SK-N-SH (cell line): ENCODE measurements at regions of chr5 and their contacts with region 1.

Region 1: GRCh38 chr5:138077065-138077696 is 6.7 kb upstream of the WNT8A start:
- DNase-seq: peak; percentile 76
- H3K4me3 ChIP-seq: no peak overlapping the region; a peak in 1 of 4 replicates
- H3K27ac ChIP-seq: no peak overlapping the region
- H3K4me1 ChIP-seq: no peaks in the 10 kb centered on the region
- H3K27me3 ChIP-seq: no peaks in the 10 kb centered on the region; the same call in 1 of the 2 replicates
- CTCF ChIP-seq: peak; percentile 90
- EP300 ChIP-seq: no peak
- RAD21 ChIP-seq: peak; percentile 90

Region 2: DNA sequence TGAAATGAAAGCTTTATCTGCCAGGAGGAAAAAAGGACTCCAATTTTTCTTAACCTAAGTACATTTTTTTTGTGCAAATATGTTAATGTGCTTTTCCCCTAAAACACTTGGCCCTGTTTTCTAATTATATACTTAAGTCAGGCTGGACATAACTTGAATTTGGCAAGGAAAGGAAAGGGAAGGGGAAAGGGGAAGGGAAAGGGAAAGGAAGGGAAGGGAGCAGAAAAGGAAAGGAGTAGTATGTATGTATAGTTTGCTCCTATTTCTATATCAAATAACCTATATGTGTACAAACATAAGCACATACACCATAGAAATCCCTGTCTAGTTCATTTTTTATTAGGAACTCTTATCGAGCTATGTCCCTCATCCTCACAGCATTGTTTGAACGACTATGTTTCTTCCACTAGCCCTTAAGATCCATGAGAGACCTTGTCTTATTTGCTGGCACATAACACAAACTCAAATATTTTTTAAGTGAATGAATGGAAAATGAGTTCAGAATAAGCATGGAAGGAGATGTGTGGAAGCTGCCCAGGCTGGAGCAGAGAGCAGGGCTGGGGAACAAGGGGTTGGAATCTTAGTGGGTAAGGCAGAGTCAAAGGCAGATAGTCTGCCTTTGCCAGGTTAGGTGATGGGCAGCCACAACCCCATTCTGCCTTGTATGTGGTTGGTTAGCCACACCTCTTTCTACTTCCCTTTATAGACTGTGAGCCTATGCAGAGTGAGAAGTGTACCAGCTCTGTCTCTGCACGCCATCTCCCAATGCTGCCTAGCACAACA is 411.3 kb before region 1 on chr5:
- CTCF ChIA-PET with region 1: no interaction called
- POLR2A ChIA-PET with region 1: no interaction called
- DNase-seq: no peak
- H3K4me3 ChIP-seq: no peak overlapping the region
- H3K27ac ChIP-seq: no peak overlapping the region
- H3K4me1 ChIP-seq: no peaks in the 10 kb centered on the region; a peak in 1 of 4 replicates
- H3K27me3 ChIP-seq: no peaks in the 10 kb centered on the region
- CTCF ChIP-seq: no peak
- EP300 ChIP-seq: no peak
- RAD21 ChIP-seq: no peak

Region 3: GRCh38 chr5:137954131-137954879 is 122.9 kb before region 1 on chr5:
- CTCF ChIA-PET with region 1: no interaction called
- POLR2A ChIA-PET with region 1: no interaction called
- DNase-seq: peak; percentile 14
- H3K4me3 ChIP-seq: peak overlapping the region in 1 of 2 experiments; percentile 36; a peak in 2 of 4 replicates
- H3K27ac ChIP-seq: peak overlapping the region; percentile 84 to 94
- H3K4me1 ChIP-seq: peaks cover 9 to 23% of the 10 kb centered on the region in 2 experiments
- H3K27me3 ChIP-seq: no peaks in the 10 kb centered on the region
- CTCF ChIP-seq: no peak
- EP300 ChIP-seq: peak; percentile 78 to 92
- RAD21 ChIP-seq: no peak

Region 4: DNA sequence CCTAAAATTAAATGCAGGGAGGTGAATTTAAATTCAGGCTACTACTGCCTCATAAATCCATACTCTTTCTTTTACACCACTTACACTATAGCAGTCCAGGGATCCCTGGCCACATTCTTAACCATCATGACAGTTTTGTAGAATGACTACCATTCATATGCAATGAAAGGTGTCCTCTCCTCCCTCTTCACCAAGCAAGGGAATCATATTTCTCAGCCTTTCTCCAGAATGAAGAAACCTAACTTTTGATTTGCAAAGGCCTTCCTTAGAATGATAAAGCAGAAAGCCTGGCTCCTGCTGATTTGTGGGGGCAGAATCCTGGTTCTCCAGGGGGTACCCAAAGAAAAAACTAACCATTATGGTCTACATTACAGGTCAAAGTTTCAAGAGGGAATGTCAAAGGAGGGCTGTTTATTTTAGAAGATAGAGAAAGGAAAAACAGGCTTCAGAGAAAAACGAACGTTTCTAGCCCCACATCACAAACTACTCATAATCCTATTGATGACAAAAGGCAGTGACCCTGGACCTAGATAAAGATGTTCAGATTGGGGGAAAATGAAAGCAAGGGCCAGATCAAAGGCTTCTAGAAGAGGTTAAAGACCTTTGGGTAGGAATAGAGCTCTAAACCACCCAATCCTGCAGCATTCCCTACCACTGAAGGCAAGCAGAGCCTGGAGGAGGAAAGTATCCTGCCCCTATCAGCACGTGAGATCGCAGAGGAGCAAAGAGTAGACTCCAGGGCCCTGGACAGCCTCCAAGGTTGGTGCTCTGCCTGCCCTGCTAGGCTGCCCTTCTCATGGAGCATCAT is 18.1 kb after region 1 on chr5:
- CTCF ChIA-PET with region 1: interaction called, 12 read pairs
- POLR2A ChIA-PET with region 1: no interaction called
- DNase-seq: no peak
- H3K4me3 ChIP-seq: no peak overlapping the region
- H3K27ac ChIP-seq: no peak overlapping the region
- H3K4me1 ChIP-seq: no peaks in the 10 kb centered on the region
- H3K27me3 ChIP-seq: peaks cover 12% of the 10 kb centered on the region; the same call in 1 of the 2 replicates
- CTCF ChIP-seq: no peak
- EP300 ChIP-seq: no peak
- RAD21 ChIP-seq: no peak

Region 5: DNA sequence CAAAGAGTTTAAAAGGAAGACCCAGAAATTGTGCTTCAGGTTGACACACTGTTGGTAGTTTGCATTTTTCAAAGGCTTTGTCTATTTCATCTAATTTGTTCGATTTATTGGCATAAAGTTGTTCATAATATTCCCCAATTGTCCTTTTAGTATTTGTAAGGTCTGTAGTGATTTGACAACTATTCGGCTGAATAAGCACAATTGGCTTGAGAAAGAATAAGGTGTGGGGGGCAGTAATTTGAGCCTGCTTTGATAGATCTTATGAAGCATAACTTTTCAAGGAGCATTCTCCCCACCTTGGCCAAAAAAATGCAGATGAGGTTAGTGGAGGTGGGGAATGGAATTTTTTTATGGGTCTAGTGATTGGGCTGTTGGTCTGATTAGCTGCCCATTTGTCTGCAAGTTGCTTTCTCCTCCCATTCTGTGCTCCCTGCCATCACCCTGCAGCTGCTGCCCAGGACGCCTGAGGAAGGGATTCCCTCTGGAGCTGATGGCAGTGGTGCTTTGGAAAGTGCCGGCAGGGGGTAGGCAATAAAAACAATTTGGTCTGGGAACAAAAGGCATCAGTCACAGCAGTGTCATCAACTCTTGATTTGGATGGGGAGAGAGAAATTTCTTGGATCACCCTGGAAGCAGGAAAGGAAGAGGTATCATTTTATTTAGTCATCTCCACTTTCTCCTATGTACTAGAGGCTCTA is 33.2 kb after region 1 on chr5:
- CTCF ChIA-PET with region 1: interaction called, 17 read pairs
- POLR2A ChIA-PET with region 1: no interaction called
- DNase-seq: no peak
- H3K4me3 ChIP-seq: no peak overlapping the region
- H3K27ac ChIP-seq: no peak overlapping the region
- H3K4me1 ChIP-seq: no peaks in the 10 kb centered on the region
- H3K27me3 ChIP-seq: no peaks in the 10 kb centered on the region
- CTCF ChIP-seq: no peak
- EP300 ChIP-seq: no peak
- RAD21 ChIP-seq: no peak

Region 6: DNA sequence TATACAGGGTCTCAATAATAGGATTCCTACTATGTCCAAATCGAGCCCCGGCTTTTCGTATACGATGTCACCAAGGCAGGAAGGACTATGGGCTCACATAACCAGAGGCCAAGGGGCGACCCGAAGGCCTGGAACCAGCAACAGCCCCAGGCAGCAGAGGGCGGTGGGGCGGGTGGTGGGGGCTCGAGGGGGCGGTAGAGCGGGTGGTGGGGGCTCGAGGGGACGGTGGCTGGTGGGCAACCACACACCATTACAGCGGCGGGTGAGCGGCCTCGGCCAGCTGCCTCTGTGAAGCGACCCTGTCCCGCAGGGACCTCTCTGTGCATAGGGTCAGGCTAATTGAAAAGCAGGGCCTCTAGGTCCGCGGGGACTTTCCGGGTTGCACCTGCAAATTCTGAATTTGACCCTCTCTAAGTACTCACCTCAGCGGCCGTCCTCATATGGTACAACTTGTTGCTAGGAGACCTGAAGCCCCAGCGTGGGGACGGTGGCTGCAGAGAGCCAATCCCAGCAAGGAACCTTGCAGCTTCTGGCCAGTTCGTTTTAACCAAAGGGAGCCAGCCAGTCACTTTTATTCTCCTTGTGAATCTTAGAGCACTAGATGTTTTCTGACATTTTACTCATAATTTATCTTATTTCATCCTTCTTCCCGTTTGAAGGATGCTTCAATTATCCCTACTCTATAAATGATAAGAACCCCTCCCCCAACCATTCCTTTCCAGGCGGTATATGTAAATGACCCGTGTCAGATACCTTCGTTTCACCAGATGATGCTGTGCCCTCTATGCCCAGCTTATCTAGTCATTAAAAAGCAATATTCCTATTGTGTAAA is 62.0 kb after region 1 on chr5 and contains the start of gene NME5:
- CTCF ChIA-PET with region 1: interaction called, 91 read pairs
- POLR2A ChIA-PET with region 1: no interaction called
- DNase-seq: peak; percentile 88
- H3K4me3 ChIP-seq: peak within 1 kb of the TSS; percentile 77 to 80
- H3K27ac ChIP-seq: peak within 1 kb of the TSS in 1 of 2 experiments; percentile 12; a peak in 1 of 4 replicates
- H3K4me1 ChIP-seq: no peaks in the 10 kb centered on the region
- H3K27me3 ChIP-seq: no peaks in the 10 kb centered on the region
- CTCF ChIP-seq: no peak
- EP300 ChIP-seq: no peak
- RAD21 ChIP-seq: no peak
- polyA plus RNA-seq, gene NME5: 3.7 and 4.1 TPM in 2 replicates

Region 7: DNA sequence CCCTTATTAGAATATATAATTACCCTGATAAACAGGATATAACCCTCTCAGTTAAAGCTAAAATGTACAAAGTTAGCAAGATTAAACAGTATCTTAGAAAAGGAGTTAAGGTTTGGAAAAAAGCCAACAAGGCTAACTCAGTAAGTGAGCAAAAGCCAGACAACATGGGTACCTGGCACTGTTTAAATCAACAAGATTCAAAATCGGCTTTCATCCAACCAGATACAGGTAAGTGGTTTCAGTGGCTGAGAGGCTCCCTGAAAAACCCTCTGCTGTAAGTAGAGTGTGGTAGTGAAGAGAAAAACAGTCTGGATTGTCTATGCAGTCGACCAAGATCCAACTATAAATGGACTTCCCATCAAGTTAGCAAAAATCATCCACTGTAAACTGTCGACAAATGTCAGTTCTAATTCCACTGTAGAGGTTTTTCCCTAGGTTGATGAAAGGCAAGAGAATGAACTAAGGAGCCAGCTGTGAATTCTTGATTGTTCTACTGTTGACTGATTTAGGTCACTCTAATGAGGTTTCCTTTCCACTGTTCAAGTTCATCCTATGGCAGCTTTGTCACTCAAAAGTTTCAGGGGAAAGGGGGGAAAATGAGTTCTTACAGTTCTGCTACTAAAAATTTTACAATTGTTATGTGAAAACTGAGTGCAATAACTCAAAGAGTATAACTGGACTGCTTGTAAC is 438.5 kb after region 1 on chr5:
- CTCF ChIA-PET with region 1: no interaction called
- POLR2A ChIA-PET with region 1: no interaction called
- DNase-seq: no peak
- H3K4me3 ChIP-seq: no peak overlapping the region
- H3K27ac ChIP-seq: no peak overlapping the region
- H3K4me1 ChIP-seq: no peaks in the 10 kb centered on the region
- H3K27me3 ChIP-seq: no peaks in the 10 kb centered on the region
- CTCF ChIP-seq: no peak
- EP300 ChIP-seq: no peak
- RAD21 ChIP-seq: no peak